Activated CD8-positive, alpha-beta T cell treated with anti-CD3 and anti-CD28 coated beads, Interleukin-2, amount 10 ng/mL, durations not matched to agents 7 days and 5 days (primary cell): ENCODE measurements at regions of chr2 and their contacts with region 1.

Region 1: GRCh38 chr2:231612179-231613053 is 19.8 kb downstream of the TEX44 start:
- DNase-seq: peak; percentile 95
- ATAC-seq: peak; percentile 57
- H3K4me3 Mint-ChIP-seq: peak overlapping the region; percentile 79
- H3K27ac Mint-ChIP-seq: peak overlapping the region; percentile 92
- H3K4me1 Mint-ChIP-seq: peaks cover 48% of the 10 kb centered on the region
- H3K27me3 Mint-ChIP-seq: peaks cover 2% of the 10 kb centered on the region

Region 2: DNA sequence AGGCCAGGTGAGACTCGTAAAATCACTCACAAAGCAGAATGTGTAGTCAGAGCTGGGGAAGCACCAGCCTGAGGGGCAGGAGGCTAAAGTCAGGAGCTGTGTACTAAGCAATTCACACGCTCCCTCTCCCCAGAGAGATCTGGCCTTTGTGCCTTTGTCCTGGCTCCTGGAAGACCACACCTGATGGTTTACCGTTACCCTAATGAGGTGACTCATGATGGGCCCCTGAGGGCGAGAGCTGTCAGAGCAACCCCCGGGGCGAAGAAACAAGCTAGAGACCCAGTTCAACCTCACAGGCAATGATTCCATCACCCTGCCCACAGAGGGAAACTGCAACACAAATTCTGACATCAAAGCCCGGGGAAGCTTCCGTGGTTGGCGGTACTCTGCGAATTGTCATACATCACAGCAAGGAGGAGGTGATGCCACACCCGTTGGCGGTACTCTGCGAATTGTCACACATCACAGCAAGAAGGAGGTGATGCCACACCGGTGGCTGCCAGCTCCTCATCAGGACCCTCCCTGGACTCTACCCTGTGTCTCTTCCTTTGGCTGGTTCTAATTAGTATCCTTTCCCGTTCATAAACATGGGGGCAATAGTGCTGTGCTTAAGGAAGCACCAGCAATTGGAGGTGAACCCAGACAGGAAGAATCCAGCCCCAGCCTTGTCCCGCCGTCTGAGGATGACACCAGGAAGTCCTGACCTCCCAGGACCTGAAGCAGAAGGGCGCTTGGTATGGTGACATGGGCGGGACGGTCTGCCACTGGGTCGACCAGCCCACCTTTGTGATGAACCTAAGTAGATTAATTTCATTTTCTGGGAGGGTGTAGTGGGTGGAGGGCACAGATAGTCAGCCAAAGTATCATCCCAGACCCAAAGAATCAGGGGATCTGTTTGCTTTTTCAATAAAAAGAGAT is 186.3 kb before region 1 on chr2:
- CTCF ChIA-PET with region 1: no interaction called
- POLR2A ChIA-PET with region 1: no interaction called
- DNase-seq: peak; percentile 64
- ATAC-seq: peak; percentile 83
- H3K4me3 Mint-ChIP-seq: peak overlapping the region; percentile 37
- H3K27ac Mint-ChIP-seq: peak overlapping the region; percentile 73
- H3K4me1 Mint-ChIP-seq: peaks cover 19% of the 10 kb centered on the region
- H3K27me3 Mint-ChIP-seq: no peaks in the 10 kb centered on the region

Region 3: DNA sequence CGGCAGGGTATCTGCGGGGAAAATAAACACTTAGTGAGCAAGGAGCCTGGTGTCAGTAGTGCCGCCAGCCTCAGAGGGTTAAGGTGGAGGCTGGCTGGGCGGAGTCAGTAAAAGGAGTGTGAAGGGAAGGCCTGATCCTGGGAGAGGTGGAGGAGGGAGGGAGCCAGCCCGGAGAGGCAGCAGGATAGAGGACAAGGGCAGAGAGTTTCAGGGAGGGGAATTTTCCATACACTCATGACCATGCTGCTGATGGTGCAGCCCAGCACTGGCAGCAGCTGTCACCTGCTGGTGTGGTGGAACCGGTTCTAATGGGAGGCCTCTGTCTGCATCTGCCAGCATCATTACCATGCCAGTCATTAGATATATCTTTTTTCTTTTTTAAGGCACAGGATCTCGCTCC is 21.8 kb before region 1 on chr2:
- CTCF ChIA-PET with region 1: no interaction called
- POLR2A ChIA-PET with region 1: no interaction called
- DNase-seq: no peak
- ATAC-seq: no peak
- H3K4me3 Mint-ChIP-seq: no peak overlapping the region
- H3K27ac Mint-ChIP-seq: no peak overlapping the region
- H3K4me1 Mint-ChIP-seq: no peaks in the 10 kb centered on the region
- H3K27me3 Mint-ChIP-seq: no peaks in the 10 kb centered on the region

Region 4: GRCh38 chr2:231627384-231628120 is 15.1 kb after region 1 on chr2:
- CTCF ChIA-PET with region 1: interaction called, 31 read pairs
- POLR2A ChIA-PET with region 1: interaction called, 21 read pairs
- DNase-seq: no peak
- ATAC-seq: peak; percentile 62
- H3K4me3 Mint-ChIP-seq: peak overlapping the region; percentile 59
- H3K27ac Mint-ChIP-seq: peak overlapping the region; percentile 91
- H3K4me1 Mint-ChIP-seq: peaks cover 20% of the 10 kb centered on the region
- H3K27me3 Mint-ChIP-seq: no peaks in the 10 kb centered on the region

Region 5: DNA sequence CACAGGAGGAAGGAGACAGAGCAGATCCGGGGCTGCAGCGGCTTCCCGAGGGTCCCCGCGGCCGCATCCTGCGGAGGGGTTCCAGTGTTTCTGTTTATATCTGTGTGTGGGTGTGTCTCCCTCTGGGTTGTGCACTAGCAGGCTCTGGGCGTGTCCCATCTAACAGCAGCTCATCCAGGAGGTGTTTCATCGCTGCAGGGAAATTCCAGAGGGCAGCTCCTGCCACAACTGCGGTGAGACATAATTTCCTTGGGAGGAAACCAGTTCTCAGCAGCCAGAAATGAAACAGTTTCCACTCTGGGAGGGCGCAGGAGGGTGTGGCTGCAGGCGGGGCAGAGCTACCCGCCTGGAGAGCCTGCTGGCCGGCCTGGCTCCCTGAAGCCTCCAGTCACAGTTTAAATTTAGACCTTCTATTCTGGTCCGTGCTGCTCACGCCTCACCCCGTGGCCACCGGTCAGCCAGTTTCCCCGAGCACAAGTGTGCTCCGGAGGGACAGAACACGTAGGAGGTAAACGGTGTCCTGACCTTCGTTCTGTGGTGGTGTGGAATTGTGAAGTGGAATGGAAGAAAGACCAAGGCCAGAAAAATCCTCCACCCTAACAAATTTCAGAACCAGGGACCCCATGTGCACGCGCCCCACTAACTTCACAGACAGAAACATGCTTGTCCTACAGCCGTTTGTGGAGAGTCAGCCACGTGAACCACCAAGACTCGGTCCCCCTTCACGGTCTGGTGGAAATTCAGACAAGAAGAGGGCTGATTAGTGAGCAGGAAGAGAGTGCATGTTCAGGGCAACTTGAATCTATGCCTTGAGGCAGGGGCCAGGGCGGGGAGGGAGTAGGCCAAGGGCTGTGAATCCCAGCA is 30.4 kb after region 1 on chr2:
- CTCF ChIA-PET with region 1: interaction called, 25 read pairs
- POLR2A ChIA-PET with region 1: interaction called, 6 read pairs
- DNase-seq: peak; percentile 69
- ATAC-seq: peak; percentile 87
- H3K4me3 Mint-ChIP-seq: peak overlapping the region; percentile 60
- H3K27ac Mint-ChIP-seq: peak overlapping the region; percentile 71
- H3K4me1 Mint-ChIP-seq: peaks cover 17% of the 10 kb centered on the region
- H3K27me3 Mint-ChIP-seq: peaks cover 2% of the 10 kb centered on the region

Region 6: DNA sequence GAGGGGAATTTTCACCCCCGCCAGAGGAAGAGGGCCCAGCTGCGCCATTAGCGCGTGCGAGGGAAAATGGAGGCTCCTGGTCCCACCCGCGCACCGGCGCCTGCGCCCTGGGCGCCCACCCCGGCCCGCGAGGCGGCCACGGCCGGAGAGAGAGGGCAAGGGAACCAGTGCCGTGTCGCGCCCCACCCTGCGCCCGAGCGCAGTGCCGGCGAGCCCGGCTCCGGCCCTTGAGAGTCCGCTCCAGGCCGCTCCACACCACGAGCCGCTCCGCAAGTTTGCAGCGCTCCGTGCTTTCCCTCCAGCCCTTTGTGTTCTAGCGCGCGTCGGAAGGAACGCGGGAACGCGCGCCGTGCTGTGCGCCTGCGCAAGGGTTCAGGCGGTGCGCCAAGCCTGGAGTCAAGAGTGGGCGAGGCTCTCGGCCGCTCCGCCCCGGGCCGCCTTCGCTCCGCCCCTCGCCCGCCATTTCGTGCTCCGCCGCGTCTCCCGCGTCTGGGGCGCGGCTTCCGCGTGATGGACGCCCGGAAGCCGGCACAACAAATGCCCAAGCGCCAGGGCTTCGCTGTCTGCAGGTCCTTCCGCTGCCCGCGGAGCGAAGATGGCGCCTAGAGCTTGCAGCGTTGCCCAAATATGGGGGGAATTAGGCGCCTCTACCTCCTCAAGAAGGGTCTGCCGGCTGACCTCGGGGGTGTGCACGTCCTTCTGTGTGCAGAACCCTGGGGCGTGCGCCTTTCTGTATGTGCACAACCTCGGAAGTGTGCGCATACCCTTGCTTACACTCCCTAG is 49.8 kb after region 1 on chr2:
- CTCF ChIA-PET with region 1: interaction called, 11 read pairs
- POLR2A ChIA-PET with region 1: interaction called, 27 read pairs
- DNase-seq: peak; percentile 97
- ATAC-seq: peak; percentile 96
- H3K4me3 Mint-ChIP-seq: peak overlapping the region; percentile 71
- H3K27ac Mint-ChIP-seq: peak overlapping the region; percentile 94
- H3K4me1 Mint-ChIP-seq: peaks cover 38% of the 10 kb centered on the region
- H3K27me3 Mint-ChIP-seq: no peaks in the 10 kb centered on the region

Region 7: GRCh38 chr2:231706731-231707624 is 94.6 kb after region 1 on chr2:
- CTCF ChIA-PET with region 1: interaction called, 267 read pairs
- POLR2A ChIA-PET with region 1: interaction called, 129 read pairs
- DNase-seq: peak; percentile 98
- ATAC-seq: peak; percentile 38
- H3K4me3 Mint-ChIP-seq: peak overlapping the region; percentile 97
- H3K27ac Mint-ChIP-seq: peak overlapping the region; percentile 100
- H3K4me1 Mint-ChIP-seq: peaks cover 22% of the 10 kb centered on the region
- H3K27me3 Mint-ChIP-seq: no peaks in the 10 kb centered on the region